Transverse colon (tissue), 4 donors: ENCODE measurements at regions of chr11 and their contacts with region 1.

Region 1: GRCh38 chr11:80963496-80963895 is 1522.7 kb upstream of the TENM4 start:
- DNase-seq: no peak
- H3K4me3 ChIP-seq: no peak overlapping the region
- H3K27ac ChIP-seq: no peak overlapping the region
- H3K4me1 ChIP-seq: no peaks in the 10 kb centered on the region
- H3K27me3 ChIP-seq: no peaks in the 10 kb centered on the region
- CTCF ChIP-seq: no peak
- EP300 ChIP-seq: no peak
- POLR2A ChIP-seq: no peak

Region 2: GRCh38 chr11:80916173-80916798 is 47.2 kb before region 1 on chr11:
- in situ Hi-C with region 1: no loop called
- intact Hi-C with region 1: no loop called
- DNase-seq: no peak
- H3K4me3 ChIP-seq: no peak overlapping the region
- H3K27ac ChIP-seq: no peak overlapping the region
- H3K4me1 ChIP-seq: no peaks in the 10 kb centered on the region
- H3K27me3 ChIP-seq: no peaks in the 10 kb centered on the region
- CTCF ChIP-seq: no peak
- EP300 ChIP-seq: no peak
- POLR2A ChIP-seq: no peak

Region 3: DNA sequence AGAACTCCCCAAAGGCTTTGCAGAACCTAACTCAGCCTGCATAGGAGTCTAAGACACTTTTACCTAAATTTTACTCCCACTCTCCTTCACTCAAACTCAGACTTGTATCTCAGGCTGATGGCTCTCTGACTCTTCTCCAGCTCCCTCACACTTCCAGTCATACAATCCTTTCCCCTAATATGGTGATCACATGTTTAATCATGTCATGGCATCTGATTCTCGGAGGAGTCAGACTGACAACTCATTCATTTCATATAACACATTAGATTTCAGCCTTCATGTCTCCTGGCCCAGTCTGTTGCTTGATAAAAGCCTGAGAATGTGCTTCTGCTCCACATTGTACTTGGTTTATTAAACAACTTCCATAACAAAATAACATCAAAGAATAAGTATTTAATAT is 18.7 kb before region 1 on chr11:
- in situ Hi-C with region 1: no loop called
- intact Hi-C with region 1: loop called (anchors 1 kb)
- DNase-seq: no peak
- H3K4me3 ChIP-seq: no peak overlapping the region
- H3K27ac ChIP-seq: no peak overlapping the region
- H3K4me1 ChIP-seq: no peaks in the 10 kb centered on the region
- H3K27me3 ChIP-seq: no peaks in the 10 kb centered on the region
- CTCF ChIP-seq: no peak
- EP300 ChIP-seq: no peak
- POLR2A ChIP-seq: no peak